CD8-positive, alpha-beta T cell (primary cell): ENCODE measurements at regions of chr19 and their contacts with region 1.

Region 1: GRCh38 chr19:16659831-16660708 is at the start of gene SMIM7:
- DNase-seq: peak; percentile 97 to 100 (median 99)
- ATAC-seq: peak; percentile 96
- H3K4me3 ChIP-seq: peak within 1 kb of the TSS; percentile 83 to 95
- H3K4me3 Mint-ChIP-seq: peak within 1 kb of the TSS; percentile 100
- H3K27ac ChIP-seq: peak within 1 kb of the TSS; percentile 89 to 90
- H3K27ac Mint-ChIP-seq: peak within 1 kb of the TSS; percentile 99
- H3K4me1 ChIP-seq: peaks cover 39% of the 10 kb centered on the region
- H3K4me1 Mint-ChIP-seq: peaks cover 45% of the 10 kb centered on the region
- H3K27me3 ChIP-seq: no peaks in the 10 kb centered on the region
- H3K27me3 Mint-ChIP-seq: no peaks in the 10 kb centered on the region
- CTCF ChIP-seq: no peak
- total RNA-seq, gene SMIM7: 47.6 to 48.2 TPM

Region 2: GRCh38 chr19:16197622-16198369 is 462.3 kb before region 1 on chr19 and contains the start of gene AP1M1:
- CTCF ChIA-PET with region 1: no interaction called
- POLR2A ChIA-PET with region 1: no interaction called
- intact Hi-C with region 1: loop called (anchors 1 to 5 kb)
- DNase-seq: peak; percentile 95 to 99 (median 98)
- ATAC-seq: peak; percentile 82
- H3K4me3 ChIP-seq: peak within 1 kb of the TSS; percentile 98 to 99
- H3K4me3 Mint-ChIP-seq: peak within 1 kb of the TSS; percentile 93
- H3K27ac ChIP-seq: peak within 1 kb of the TSS; percentile 87 to 98
- H3K27ac Mint-ChIP-seq: peak within 1 kb of the TSS; percentile 97
- H3K4me1 ChIP-seq: peaks cover 54% of the 10 kb centered on the region
- H3K4me1 Mint-ChIP-seq: peaks cover 49% of the 10 kb centered on the region
- H3K27me3 ChIP-seq: no peaks in the 10 kb centered on the region
- H3K27me3 Mint-ChIP-seq: no peaks in the 10 kb centered on the region
- CTCF ChIP-seq: no peak
- total RNA-seq, gene AP1M1: 76.2 to 83.4 TPM

Region 3: GRCh38 chr19:16482736-16483135 is 177.3 kb before region 1 on chr19:
- CTCF ChIA-PET with region 1: no interaction called
- POLR2A ChIA-PET with region 1: no interaction called
- intact Hi-C with region 1: no loop called
- DNase-seq: no peak
- ATAC-seq: no peak
- H3K4me3 ChIP-seq: no peak overlapping the region
- H3K4me3 Mint-ChIP-seq: no peak overlapping the region
- H3K27ac ChIP-seq: no peak overlapping the region
- H3K27ac Mint-ChIP-seq: no peak overlapping the region
- H3K4me1 ChIP-seq: no peaks in the 10 kb centered on the region
- H3K4me1 Mint-ChIP-seq: no peaks in the 10 kb centered on the region
- H3K27me3 ChIP-seq: no peaks in the 10 kb centered on the region
- H3K27me3 Mint-ChIP-seq: peaks cover 4% of the 10 kb centered on the region
- CTCF ChIP-seq: no peak

Region 4: GRCh38 chr19:16495982-16496612 is 164.0 kb before region 1 on chr19 and contains the starts of genes C19orf44 and CALR3:
- CTCF ChIA-PET with region 1: no interaction called
- POLR2A ChIA-PET with region 1: interaction called, 9 read pairs
- intact Hi-C with region 1: loop called (anchors 1 kb)
- DNase-seq: peak; percentile 92 to 98 (median 96)
- ATAC-seq: peak; percentile 99
- H3K4me3 ChIP-seq: peak within 1 kb of the TSS; percentile 66 to 89
- H3K4me3 Mint-ChIP-seq: peak within 1 kb of the TSS; percentile 94
- H3K27ac ChIP-seq: peak within 1 kb of the TSS; percentile 67 to 73
- H3K27ac Mint-ChIP-seq: peak within 1 kb of the TSS; percentile 86
- H3K4me1 ChIP-seq: peaks cover 11% of the 10 kb centered on the region
- H3K4me1 Mint-ChIP-seq: peaks cover 14% of the 10 kb centered on the region
- H3K27me3 ChIP-seq: no peaks in the 10 kb centered on the region
- H3K27me3 Mint-ChIP-seq: no peaks in the 10 kb centered on the region
- CTCF ChIP-seq: no peak
- total RNA-seq, gene C19orf44: 0.52 to 0.61 TPM
- total RNA-seq, gene CALR3: not detected

Region 5: DNA sequence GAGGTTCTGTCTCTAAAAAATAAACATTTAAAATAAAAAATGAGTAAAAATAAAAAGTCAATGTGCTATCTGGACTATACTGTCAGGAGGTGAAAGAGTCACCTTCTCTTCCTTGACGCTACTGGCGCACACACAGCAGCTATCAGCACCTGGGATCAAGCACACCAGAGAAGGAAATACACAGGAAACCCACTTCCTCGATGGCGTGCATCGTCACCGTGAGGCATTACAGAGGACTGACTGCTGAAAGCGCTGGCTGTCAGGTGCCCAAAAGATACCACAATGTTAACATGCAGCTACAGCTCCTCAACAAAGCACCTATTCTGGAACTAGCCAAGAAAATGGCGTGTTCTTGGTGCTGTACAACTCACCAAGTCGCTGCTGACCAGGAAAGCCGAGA is 93.9 kb before region 1 on chr19:
- CTCF ChIA-PET with region 1: no interaction called
- POLR2A ChIA-PET with region 1: interaction called, 10 read pairs
- intact Hi-C with region 1: loop called in 1 of 2 experiments (anchors 1 kb)
- DNase-seq: peak; percentile 72 to 96 (median 82)
- ATAC-seq: peak; percentile 97
- H3K4me3 ChIP-seq: no peak overlapping the region
- H3K4me3 Mint-ChIP-seq: peak overlapping the region; percentile 73
- H3K27ac ChIP-seq: peak overlapping the region; percentile 49 to 66
- H3K27ac Mint-ChIP-seq: peak overlapping the region; percentile 99
- H3K4me1 ChIP-seq: peaks cover 21% of the 10 kb centered on the region
- H3K4me1 Mint-ChIP-seq: peaks cover 31% of the 10 kb centered on the region
- H3K27me3 ChIP-seq: no peaks in the 10 kb centered on the region
- H3K27me3 Mint-ChIP-seq: no peaks in the 10 kb centered on the region
- CTCF ChIP-seq: no peak

Region 6: GRCh38 chr19:16584248-16585141 is 75.6 kb before region 1 on chr19:
- CTCF ChIA-PET with region 1: no interaction called
- POLR2A ChIA-PET with region 1: interaction called, 10 read pairs
- intact Hi-C with region 1: loop called in 1 of 2 experiments (anchors 1 kb)
- DNase-seq: peak; percentile 77 to 99 (median 90)
- ATAC-seq: peak; percentile 80
- H3K4me3 ChIP-seq: peak overlapping the region; percentile 23 to 30
- H3K4me3 Mint-ChIP-seq: peak overlapping the region; percentile 70
- H3K27ac ChIP-seq: peak overlapping the region; percentile 18 to 84
- H3K27ac Mint-ChIP-seq: peak overlapping the region; percentile 94
- H3K4me1 ChIP-seq: peaks cover 76% of the 10 kb centered on the region
- H3K4me1 Mint-ChIP-seq: peaks cover 79% of the 10 kb centered on the region
- H3K27me3 ChIP-seq: no peaks in the 10 kb centered on the region
- H3K27me3 Mint-ChIP-seq: no peaks in the 10 kb centered on the region
- CTCF ChIP-seq: no peak

Region 7: GRCh38 chr19:16736709-16737108 is 76.6 kb after region 1 on chr19:
- CTCF ChIA-PET with region 1: no interaction called
- POLR2A ChIA-PET with region 1: no interaction called
- intact Hi-C with region 1: no loop called
- DNase-seq: no peak
- ATAC-seq: no peak
- H3K4me3 ChIP-seq: no peak overlapping the region
- H3K4me3 Mint-ChIP-seq: no peak overlapping the region
- H3K27ac ChIP-seq: no peak overlapping the region
- H3K27ac Mint-ChIP-seq: no peak overlapping the region
- H3K4me1 ChIP-seq: no peaks in the 10 kb centered on the region
- H3K4me1 Mint-ChIP-seq: no peaks in the 10 kb centered on the region
- H3K27me3 ChIP-seq: peaks cover 0 to 3% of the 10 kb centered on the region in 2 experiments
- H3K27me3 Mint-ChIP-seq: peaks cover 14% of the 10 kb centered on the region
- CTCF ChIP-seq: no peak